ENCODE measurements at regions of chr7 and their contacts with region 1.

Region 1: GRCh38 chr7:55365675-55366460 is 731 bp downstream of the LANCL2 start:
- DNase-seq: peak; percentile 70 to 97
- H3K4me3 ChIP-seq: peak overlapping the region; percentile 79 to 99 (median 98)
- H3K27ac ChIP-seq: peak overlapping the region; percentile 99
- H3K4me1 ChIP-seq: peaks cover 0 to 6% (median 3%) of the 10 kb centered on the region in 4 experiments; a peak in 4 of 7 replicates
- H3K27me3 ChIP-seq: no peaks in the 10 kb centered on the region
- CTCF ChIP-seq: peak in 2 of 3 experiments; percentile 13 to 28; a peak in 2 of 4 replicates
- EP300 ChIP-seq: peak in 1 of 2 experiments; percentile 91; a peak in 2 of 3 replicates
- POLR2A ChIP-seq: peak; percentile 63 to 94
- RAD21 ChIP-seq: peak; percentile 7 to 25; a peak in 3 of 4 replicates

Region 2: GRCh38 chr7:55224111-55224510 is 141.8 kb before region 1 on chr7:
- CTCF ChIA-PET with region 1: no interaction called
- POLR2A ChIA-PET with region 1: no interaction called
- DNase-seq: no peak
- H3K4me3 ChIP-seq: no peak overlapping the region
- H3K27ac ChIP-seq: no peak overlapping the region
- H3K4me1 ChIP-seq: no peaks in the 10 kb centered on the region
- H3K27me3 ChIP-seq: no peaks in the 10 kb centered on the region
- CTCF ChIP-seq: no peak
- EP300 ChIP-seq: no peak
- POLR2A ChIP-seq: no peak
- RAD21 ChIP-seq: no peak

Region 3: DNA sequence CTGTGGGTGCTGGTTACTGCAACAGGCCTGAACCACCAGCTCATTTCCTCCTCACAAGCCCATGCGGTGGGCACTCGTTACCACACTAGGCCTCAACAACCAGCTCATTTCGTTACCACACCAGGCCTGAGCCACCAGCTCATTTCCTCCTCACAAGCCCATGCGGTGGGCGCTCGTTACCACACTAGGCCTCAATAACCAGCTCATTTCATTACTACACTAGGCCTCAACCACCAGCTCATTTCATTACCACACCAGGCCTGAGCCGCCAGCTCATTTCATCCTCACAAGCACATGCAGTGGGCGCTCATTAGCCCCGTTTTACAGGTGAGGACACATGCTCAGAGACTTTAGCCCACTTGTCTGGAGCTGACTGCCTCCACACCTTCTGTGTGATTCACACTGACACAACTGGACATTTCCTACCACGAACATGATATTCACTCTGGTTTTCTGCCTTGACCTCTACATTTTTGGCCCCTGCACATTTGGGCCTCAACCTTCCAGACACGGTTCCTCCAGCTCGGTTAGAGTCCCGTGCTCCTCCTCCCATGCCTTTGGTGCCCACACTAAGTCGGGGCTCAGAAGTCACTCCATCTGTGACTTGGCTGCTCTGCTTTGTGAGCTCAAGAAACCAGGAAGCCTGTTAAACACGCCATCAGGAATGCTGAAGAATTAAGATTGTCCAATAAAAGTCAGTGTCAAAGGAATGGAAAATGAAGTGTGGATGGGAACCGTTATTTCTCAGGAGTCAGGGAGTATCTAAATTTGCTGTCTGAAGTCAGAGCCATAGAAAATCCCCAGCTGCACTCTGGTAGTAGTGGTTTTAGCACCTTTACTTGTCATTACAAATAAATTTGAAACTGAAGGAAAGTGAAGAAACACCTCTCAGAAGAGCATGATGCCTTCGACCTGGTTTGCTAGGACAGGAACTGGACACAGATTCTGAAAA is 56.6 kb before region 1 on chr7:
- CTCF ChIA-PET with region 1: no interaction called
- POLR2A ChIA-PET with region 1: interaction called, 12 read pairs
- DNase-seq: no peak
- H3K4me3 ChIP-seq: no peak overlapping the region
- H3K27ac ChIP-seq: no peak overlapping the region
- H3K4me1 ChIP-seq: peaks cover 0 to 5% (median 1%) of the 10 kb centered on the region in 4 experiments; a peak in 1 of 7 replicates
- H3K27me3 ChIP-seq: no peaks in the 10 kb centered on the region
- CTCF ChIP-seq: no peak
- EP300 ChIP-seq: no peak
- POLR2A ChIP-seq: no peak
- RAD21 ChIP-seq: no peak

Region 4: GRCh38 chr7:55343860-55344606 is 21.8 kb before region 1 on chr7:
- CTCF ChIA-PET with region 1: interaction called, 3 read pairs
- POLR2A ChIA-PET with region 1: interaction called, 18 read pairs
- DNase-seq: no peak
- H3K4me3 ChIP-seq: no peak overlapping the region
- H3K27ac ChIP-seq: no peak overlapping the region
- H3K4me1 ChIP-seq: peaks cover 0 to under 1% (median 0%) of the 10 kb centered on the region in 4 experiments; a peak in 1 of 7 replicates
- H3K27me3 ChIP-seq: no peaks in the 10 kb centered on the region
- CTCF ChIP-seq: no peak
- EP300 ChIP-seq: no peak
- POLR2A ChIP-seq: no peak
- RAD21 ChIP-seq: no peak

Region 5: GRCh38 chr7:55351263-55351662 is 14.6 kb before region 1 on chr7:
- CTCF ChIA-PET with region 1: no interaction called
- POLR2A ChIA-PET with region 1: interaction called, 15 read pairs
- DNase-seq: no peak
- H3K4me3 ChIP-seq: no peak overlapping the region
- H3K27ac ChIP-seq: no peak overlapping the region
- H3K4me1 ChIP-seq: peaks cover 0 to 3% (median 0%) of the 10 kb centered on the region in 4 experiments; a peak in 1 of 7 replicates
- H3K27me3 ChIP-seq: no peaks in the 10 kb centered on the region
- CTCF ChIP-seq: no peak
- EP300 ChIP-seq: no peak
- POLR2A ChIP-seq: no peak
- RAD21 ChIP-seq: no peak

Region 6: DNA sequence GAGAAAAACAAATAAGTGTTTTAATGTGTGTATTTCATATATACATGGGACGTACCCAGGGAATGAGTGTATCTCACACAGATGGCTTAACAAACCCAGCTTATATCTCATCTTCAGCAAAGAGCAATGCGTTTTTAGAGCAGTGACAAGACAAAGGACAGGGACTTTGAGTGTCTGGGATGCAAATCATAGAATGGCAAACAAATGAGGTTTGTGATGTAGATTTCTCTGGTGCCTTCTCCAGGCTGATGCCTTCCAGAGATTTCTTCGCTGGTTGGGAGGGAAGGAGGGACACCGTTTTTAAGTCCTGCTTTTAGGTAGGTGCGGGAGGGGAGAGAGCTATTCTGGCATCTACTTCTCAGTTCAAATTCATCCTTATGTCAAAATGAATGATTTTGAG is 15.8 kb after region 1 on chr7:
- CTCF ChIA-PET with region 1: no interaction called
- POLR2A ChIA-PET with region 1: interaction called, 32 read pairs
- DNase-seq: no peak
- H3K4me3 ChIP-seq: no peak overlapping the region
- H3K27ac ChIP-seq: no peak overlapping the region
- H3K4me1 ChIP-seq: no peaks in the 10 kb centered on the region
- H3K27me3 ChIP-seq: no peaks in the 10 kb centered on the region
- CTCF ChIP-seq: no peak
- EP300 ChIP-seq: no peak
- POLR2A ChIP-seq: no peak
- RAD21 ChIP-seq: no peak

Region 7: GRCh38 chr7:55400191-55400590 is 34.3 kb after region 1 on chr7:
- CTCF ChIA-PET with region 1: no interaction called
- POLR2A ChIA-PET with region 1: no interaction called
- DNase-seq: no peak
- H3K4me3 ChIP-seq: no peak overlapping the region
- H3K27ac ChIP-seq: no peak overlapping the region
- H3K4me1 ChIP-seq: no peaks in the 10 kb centered on the region
- H3K27me3 ChIP-seq: no peaks in the 10 kb centered on the region
- CTCF ChIP-seq: no peak
- EP300 ChIP-seq: no peak
- POLR2A ChIP-seq: no peak
- RAD21 ChIP-seq: no peak

Region 8: DNA sequence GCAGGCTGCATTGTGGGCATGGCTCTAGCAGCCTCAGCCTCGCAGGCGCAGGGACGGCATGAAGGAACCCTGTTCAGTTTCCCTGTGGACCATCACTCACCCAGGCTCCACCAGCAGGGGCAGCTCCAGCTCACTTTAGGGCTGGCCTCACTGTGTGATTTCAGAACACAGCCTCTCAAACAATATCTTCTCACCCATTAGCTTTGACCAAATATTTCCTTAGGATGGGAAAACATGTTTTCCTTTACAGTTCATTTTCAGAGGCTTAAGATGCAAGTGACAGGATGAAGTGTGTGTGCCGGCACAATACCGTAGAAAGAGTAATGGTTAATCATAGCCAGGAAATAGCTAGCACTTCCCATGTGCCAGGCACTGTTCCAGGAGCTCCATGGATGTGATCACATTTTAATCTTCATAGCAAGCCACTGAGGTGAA is 57.4 kb after region 1 on chr7:
- CTCF ChIA-PET with region 1: interaction called, 3 read pairs
- POLR2A ChIA-PET with region 1: interaction called, 10 read pairs
- DNase-seq: no peak
- H3K4me3 ChIP-seq: no peak overlapping the region
- H3K27ac ChIP-seq: no peak overlapping the region
- H3K4me1 ChIP-seq: peaks cover 0 to 2% (median under 1%) of the 10 kb centered on the region in 4 experiments; a peak in 2 of 7 replicates
- H3K27me3 ChIP-seq: no peaks in the 10 kb centered on the region
- CTCF ChIP-seq: peak; percentile 12 to 42 (median 42); a peak in 3 of 4 replicates
- EP300 ChIP-seq: no peak
- POLR2A ChIP-seq: no peak
- RAD21 ChIP-seq: peak; percentile 34 to 39; a peak in 2 of 4 replicates